ENCODE measurements at regions of chr17 and their contacts with region 1.

Region 1: DNA sequence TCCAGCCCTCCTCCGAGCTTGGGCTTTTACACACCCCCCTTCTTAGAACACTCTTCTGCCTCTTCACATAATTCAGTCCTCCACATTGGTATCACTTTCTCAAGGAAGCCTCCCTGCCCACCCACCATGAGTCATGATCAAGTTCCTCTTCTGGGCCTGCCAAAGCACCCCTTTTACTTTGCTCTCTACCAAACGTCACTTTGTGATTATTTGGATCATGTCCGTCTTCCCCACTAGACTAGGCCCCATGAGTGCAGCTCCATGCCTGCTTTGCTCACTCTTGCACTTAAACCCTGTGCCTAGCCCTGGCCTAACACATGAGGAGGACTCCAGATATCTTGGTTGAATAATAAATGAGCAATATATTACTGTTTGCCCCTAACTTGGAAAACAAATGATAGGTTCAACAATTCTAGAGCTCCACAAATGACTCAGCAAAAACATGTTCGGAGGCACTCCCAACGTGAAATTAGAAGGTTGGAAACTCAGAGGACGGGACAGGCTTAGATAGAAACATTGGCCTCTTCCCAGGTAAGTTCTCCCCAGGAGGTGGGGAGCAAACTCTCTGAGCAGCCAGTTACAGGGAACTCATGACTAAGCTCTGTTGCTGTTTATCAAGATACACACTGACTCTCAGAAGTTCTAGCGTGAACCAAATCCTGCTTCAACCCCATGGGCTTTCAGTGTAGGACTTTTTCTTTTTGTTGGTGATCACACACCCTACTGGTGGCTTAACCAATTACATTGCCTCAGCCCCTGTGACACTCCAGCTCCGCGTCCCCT is 28.3 kb downstream of the G6PC1 start:
- DNase-seq: peak; percentile 92
- ATAC-seq: peak; percentile 96
- H3K4me3 ChIP-seq: peak overlapping the region; percentile 18 to 55 (median 38); a peak in 4 of 6 replicates
- H3K27ac ChIP-seq: peak overlapping the region; percentile 83
- H3K4me1 ChIP-seq: peaks cover 38% of the 10 kb centered on the region
- H3K27me3 ChIP-seq: no peaks in the 10 kb centered on the region; a peak in 1 of 5 replicates
- CTCF ChIP-seq: peak; percentile 90
- EP300 ChIP-seq: peak in 1 of 2 experiments; percentile 35; a peak in 1 of 4 replicates
- POLR2A ChIP-seq: no peak
- RAD21 ChIP-seq: peak; percentile 94

Region 2: DNA sequence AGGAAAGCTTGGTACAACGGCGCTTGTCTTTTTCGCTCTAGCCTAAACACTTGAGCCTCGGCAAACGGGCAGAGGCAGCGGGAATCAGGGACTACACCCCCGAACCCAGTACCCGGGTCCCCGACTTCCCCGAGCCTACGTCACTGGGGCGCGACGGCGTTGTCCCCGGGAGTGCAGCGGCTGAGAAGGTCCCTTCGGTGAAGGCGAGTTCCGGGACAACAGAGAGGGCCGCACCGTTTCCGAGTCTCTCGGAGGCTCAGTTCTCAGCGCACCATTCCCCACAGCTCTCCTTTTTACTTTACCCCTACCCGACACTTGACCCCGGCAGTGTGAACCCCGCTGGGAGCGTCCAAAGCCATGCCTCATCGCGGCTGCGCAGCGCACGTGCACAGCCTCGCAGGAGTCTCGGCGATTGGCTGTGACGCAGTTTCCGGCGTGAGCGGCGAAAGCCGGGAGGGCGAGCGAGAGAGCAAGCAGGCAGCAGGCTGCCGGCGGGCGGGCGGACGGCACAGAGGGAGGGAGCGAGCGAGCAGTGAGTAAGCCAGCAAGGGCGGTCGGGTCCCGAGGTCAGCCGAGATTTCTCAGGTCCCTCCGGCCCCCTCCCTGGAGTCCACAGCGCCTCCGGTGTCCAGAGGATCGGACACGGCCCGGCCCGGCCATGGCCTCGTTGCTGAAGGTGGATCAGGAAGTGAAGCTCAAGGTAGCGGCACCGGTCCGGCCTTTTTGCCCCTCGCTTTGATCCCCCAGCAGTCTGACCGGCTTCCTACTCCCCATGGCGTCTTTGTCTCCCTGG is 95.7 kb before region 1 on chr17 and contains the start of gene PSME3:
- CTCF ChIA-PET with region 1: no interaction called
- POLR2A ChIA-PET with region 1: interaction called, 14 read pairs
- in situ Hi-C with region 1: no loop called
- intact Hi-C with region 1: no loop called
- DNase-seq: peak; percentile 88
- ATAC-seq: peak; percentile 95
- H3K4me3 ChIP-seq: peak within 1 kb of the TSS; percentile 92 to 98 (median 92)
- H3K27ac ChIP-seq: peak within 1 kb of the TSS; percentile 90
- H3K4me1 ChIP-seq: peaks cover 40% of the 10 kb centered on the region
- H3K27me3 ChIP-seq: no peaks in the 10 kb centered on the region; a peak in 1 of 5 replicates
- CTCF ChIP-seq: peak; percentile 37
- EP300 ChIP-seq: peak in 1 of 2 experiments; percentile 26; a peak in 2 of 4 replicates
- POLR2A ChIP-seq: peak; percentile 93 to 97
- RAD21 ChIP-seq: peak; percentile 30; the same call in 1 of the 2 replicates
- total RNA-seq, gene PSME3: 135 and 202 TPM in 2 replicates

Region 3: GRCh38 chr17:42843358-42843934 is 85.5 kb before region 1 on chr17:
- CTCF ChIA-PET with region 1: interaction called, 32 read pairs
- POLR2A ChIA-PET with region 1: interaction called, 39 read pairs
- in situ Hi-C with region 1: loop called (anchors 5 kb)
- intact Hi-C with region 1: loop called (anchors 1 kb)
- DNase-seq: peak; percentile 73
- ATAC-seq: peak; percentile 71
- H3K4me3 ChIP-seq: no peak overlapping the region
- H3K27ac ChIP-seq: no peak overlapping the region
- H3K4me1 ChIP-seq: peaks cover 11% of the 10 kb centered on the region; the same call in 1 of the 2 replicates
- H3K27me3 ChIP-seq: no peaks in the 10 kb centered on the region
- CTCF ChIP-seq: peak; percentile 97
- EP300 ChIP-seq: no peak
- POLR2A ChIP-seq: peak in 1 of 2 experiments; percentile 43; a peak in 1 of 4 replicates
- RAD21 ChIP-seq: peak; percentile 97

Region 4: DNA sequence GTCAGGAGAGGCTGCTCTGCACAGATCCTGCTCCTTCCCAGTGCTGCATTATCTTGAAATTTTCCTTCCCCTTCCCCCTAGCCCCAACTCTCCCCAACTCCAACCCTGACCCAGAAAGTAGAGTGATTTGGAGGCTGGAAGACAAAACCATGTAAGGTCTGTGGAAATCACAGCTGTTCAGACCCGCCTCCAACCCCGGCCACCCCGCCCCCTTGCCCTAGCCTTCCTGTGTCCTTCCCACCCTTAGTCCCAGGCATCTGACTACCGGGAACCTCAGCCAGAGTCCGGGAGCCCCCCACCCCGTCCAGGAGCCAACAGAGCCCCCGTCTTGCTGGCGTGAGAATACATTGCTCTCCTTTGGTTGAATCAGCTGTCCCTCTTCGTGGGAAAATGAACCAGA is 78.0 kb before region 1 on chr17 and contains the start of gene AOC3:
- CTCF ChIA-PET with region 1: no interaction called
- POLR2A ChIA-PET with region 1: interaction called, 39 read pairs
- in situ Hi-C with region 1: no loop called
- intact Hi-C with region 1: no loop called
- DNase-seq: peak; percentile 28
- ATAC-seq: peak; percentile 13; the same call in 2 of the 3 replicates
- H3K4me3 ChIP-seq: peak within 1 kb of the TSS in 2 of 3 experiments; percentile 23 to 58; a peak in 2 of 6 replicates
- H3K27ac ChIP-seq: no peak within 1 kb of the TSS
- H3K4me1 ChIP-seq: peaks cover 75% of the 10 kb centered on the region
- H3K27me3 ChIP-seq: no peaks in the 10 kb centered on the region
- CTCF ChIP-seq: no peak
- EP300 ChIP-seq: no peak
- POLR2A ChIP-seq: no peak
- RAD21 ChIP-seq: no peak
- total RNA-seq, gene AOC3: 8.7 and 10.4 TPM in 2 replicates

Region 5: DNA sequence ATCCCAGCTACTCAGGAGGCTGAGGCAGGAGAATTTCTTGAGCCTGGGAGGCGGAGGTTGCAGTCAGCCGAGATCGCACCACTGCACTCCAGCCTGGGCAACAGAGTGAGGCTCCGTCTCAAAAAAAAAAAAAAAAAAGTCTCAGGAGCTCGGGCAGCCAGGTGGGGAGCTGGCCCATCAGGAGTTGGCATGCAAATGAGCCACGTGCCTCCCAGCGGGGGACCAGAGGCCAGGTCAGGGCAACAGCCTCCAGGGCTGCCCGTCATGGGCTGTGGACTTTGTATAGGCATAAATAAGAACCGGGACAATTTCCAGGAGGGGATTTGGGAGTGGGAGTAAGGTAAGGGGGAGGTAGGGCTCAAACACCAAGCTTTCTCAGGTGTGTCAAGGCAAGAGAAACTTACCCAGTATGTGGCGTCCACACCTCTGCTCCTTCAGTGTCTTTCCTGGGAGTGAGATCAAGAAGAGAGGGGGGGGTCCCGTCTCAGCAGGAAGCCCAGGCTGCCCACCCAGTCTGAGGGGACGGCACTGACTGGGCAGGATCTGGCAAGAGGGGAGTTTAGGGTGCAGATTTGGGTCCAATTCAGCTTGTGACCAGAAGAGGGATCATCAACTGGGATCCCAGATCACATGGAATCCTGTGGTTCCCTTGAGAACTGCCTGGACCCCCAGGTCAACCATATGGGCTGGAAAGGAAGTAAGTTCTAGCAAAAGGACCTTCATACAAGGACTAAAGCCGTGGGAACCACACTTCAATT is 50.6 kb before region 1 on chr17:
- CTCF ChIA-PET with region 1: interaction called, 6 read pairs
- POLR2A ChIA-PET with region 1: interaction called, 6 read pairs
- in situ Hi-C with region 1: no loop called
- intact Hi-C with region 1: loop called (anchors 1 kb)
- DNase-seq: peak; percentile 59
- ATAC-seq: peak; percentile 78
- H3K4me3 ChIP-seq: peak overlapping the region in 1 of 3 experiments; percentile 31; a peak in 2 of 6 replicates
- H3K27ac ChIP-seq: no peak overlapping the region
- H3K4me1 ChIP-seq: peaks cover 69% of the 10 kb centered on the region
- H3K27me3 ChIP-seq: no peaks in the 10 kb centered on the region
- CTCF ChIP-seq: peak; percentile 35
- EP300 ChIP-seq: peak in 1 of 2 experiments; percentile 67; a peak in 2 of 4 replicates
- POLR2A ChIP-seq: no peak
- RAD21 ChIP-seq: peak; percentile 43

Region 6: DNA sequence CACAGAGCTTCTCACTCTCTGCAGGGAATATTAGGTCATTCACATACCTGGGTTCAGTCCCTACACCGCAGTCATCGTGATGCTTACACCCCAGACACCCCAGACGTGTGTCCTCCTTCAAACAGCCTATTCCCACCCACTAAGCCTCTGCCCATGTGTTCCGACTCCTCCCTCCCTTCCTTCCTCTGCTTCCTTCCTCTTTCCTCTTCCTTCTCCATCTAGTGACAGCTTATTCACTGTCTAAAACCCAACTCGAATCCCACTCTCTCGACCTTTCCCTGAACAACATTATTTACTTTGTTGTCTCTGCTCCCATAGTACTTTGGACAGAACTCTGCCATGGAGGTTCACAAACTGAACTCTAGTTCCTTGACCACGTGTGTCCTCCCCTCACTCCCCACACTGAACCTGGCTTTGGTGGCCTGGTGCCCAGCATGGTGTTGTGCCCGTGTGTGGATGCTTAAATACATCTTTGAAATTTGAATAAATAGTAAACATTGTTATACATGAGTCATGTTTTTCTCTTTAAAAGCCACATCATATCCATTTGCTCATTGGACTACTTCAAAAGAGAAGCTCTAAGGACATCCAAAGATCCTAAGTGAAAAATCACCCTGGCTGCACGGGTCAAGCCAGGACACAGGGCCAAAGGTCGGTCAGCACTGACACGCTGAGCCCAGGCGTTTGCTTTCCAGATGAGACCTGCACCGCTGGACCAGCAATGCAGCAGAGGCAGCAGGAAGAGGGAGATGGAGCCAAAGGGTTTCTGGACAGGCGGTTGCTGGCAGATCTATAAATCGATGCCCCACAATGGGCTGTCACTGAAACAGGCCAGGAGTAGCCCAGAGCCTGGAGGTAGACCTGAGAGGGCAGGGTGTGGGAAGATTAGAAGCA is 42.4 kb before region 1 on chr17:
- CTCF ChIA-PET with region 1: no interaction called
- POLR2A ChIA-PET with region 1: interaction called, 11 read pairs
- in situ Hi-C with region 1: no loop called
- intact Hi-C with region 1: no loop called
- DNase-seq: peak; percentile 72
- ATAC-seq: peak; percentile 78
- H3K4me3 ChIP-seq: peak overlapping the region in 1 of 3 experiments; percentile 49; a peak in 2 of 6 replicates
- H3K27ac ChIP-seq: peak overlapping the region; percentile 65
- H3K4me1 ChIP-seq: peaks cover 96% of the 10 kb centered on the region
- H3K27me3 ChIP-seq: no peaks in the 10 kb centered on the region
- CTCF ChIP-seq: peak; percentile 45
- EP300 ChIP-seq: no peak; a peak in 1 of 4 replicates
- POLR2A ChIP-seq: no peak; a peak in 2 of 4 replicates
- RAD21 ChIP-seq: peak; percentile 67; the same call in 1 of the 2 replicates

Region 7: DNA sequence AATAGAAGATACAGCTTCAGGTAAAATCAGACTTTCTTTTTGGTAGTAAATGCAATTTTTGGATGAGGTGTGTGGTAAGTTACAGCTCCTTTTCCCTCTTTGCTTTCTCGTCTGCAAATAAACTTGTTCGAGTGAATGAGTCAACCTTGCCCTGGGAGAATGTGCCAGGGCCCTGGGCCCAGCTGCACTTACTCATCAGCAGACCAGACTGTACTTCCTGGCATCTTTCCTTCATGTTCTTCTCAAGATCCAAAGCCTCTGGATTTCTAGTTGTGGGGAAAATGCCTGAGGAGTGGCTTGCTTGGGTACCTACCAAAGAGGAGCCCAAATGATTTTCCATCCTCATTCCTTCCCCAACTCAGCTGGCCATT is 33.7 kb before region 1 on chr17:
- CTCF ChIA-PET with region 1: no interaction called
- POLR2A ChIA-PET with region 1: interaction called, 21 read pairs
- in situ Hi-C with region 1: no loop called
- intact Hi-C with region 1: no loop called
- DNase-seq: no peak
- ATAC-seq: no peak
- H3K4me3 ChIP-seq: peak overlapping the region; percentile 9 to 57 (median 22); a peak in 4 of 6 replicates
- H3K27ac ChIP-seq: peak overlapping the region; percentile 85
- H3K4me1 ChIP-seq: peaks cover 95% of the 10 kb centered on the region
- H3K27me3 ChIP-seq: no peaks in the 10 kb centered on the region
- CTCF ChIP-seq: no peak
- EP300 ChIP-seq: no peak
- POLR2A ChIP-seq: no peak
- RAD21 ChIP-seq: no peak